Vagina (tissue), 2 donors: ENCODE measurements at regions of chr1 and their contacts with region 1.

Region 1: GRCh38 chr1:246699095-246699735 is 25.0 kb upstream of the SCCPDH start:
- DNase-seq: no peak
- H3K4me3 ChIP-seq: peak overlapping the region; percentile 33 to 45
- H3K27ac ChIP-seq: peak overlapping the region; percentile 64
- H3K4me1 ChIP-seq: peaks cover 18% of the 10 kb centered on the region
- H3K27me3 ChIP-seq: no peaks in the 10 kb centered on the region
- CTCF ChIP-seq: peak; percentile 61 to 73 (median 62)
- POLR2A ChIP-seq: no peak

Region 2: DNA sequence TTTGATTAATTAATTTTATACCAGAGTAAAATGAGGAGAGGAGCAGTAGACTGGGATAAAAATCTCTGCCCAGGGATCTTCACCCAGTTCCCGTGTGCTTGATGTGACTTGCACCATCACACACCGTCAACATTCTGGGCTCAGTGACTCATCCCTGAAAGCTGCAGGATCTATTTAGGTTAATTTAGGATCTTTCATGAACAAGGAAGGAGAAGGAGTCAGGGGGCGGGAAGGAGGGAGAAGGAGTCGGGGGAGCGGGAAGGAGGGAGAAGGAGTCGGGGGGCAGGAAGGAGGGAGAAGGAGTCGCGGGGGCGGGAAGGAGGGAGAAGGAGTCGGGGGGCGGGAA is 374.5 kb before region 1 on chr1:
- intact Hi-C with region 1: no loop called
- DNase-seq: no peak
- H3K4me3 ChIP-seq: no peak overlapping the region
- H3K27ac ChIP-seq: no peak overlapping the region
- H3K4me1 ChIP-seq: no peaks in the 10 kb centered on the region
- H3K27me3 ChIP-seq: no peaks in the 10 kb centered on the region
- CTCF ChIP-seq: no peak
- POLR2A ChIP-seq: no peak

Region 3: DNA sequence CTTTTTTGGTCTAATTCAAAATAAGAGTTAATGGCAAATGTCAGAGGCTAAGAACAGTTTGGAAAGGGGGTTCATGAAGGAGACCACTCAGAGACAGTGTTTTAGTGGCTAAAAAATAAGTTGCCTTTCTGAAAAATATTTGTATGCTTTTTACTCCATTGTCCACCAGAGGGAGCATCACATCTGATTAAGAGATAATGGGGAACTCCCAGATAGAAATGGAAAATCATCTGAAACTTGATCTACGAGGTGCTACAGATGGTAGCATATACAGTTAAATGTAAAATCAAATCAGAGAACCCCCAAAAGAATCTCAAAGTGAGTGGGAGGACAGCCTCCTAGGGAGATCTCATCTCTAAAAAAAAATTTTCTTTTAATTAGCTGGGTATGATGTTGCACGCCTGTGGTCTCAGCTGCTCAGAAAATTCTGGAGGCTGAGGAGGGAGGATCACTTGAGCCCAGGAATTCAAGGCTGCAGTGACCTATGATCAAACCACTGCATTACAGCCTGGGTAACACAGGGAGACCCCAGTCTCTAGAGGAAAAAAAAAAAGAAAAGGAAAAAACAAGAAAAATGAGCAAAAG is 201.8 kb before region 1 on chr1:
- intact Hi-C with region 1: loop called (anchors 5 kb)
- DNase-seq: no peak
- H3K4me3 ChIP-seq: no peak overlapping the region
- H3K27ac ChIP-seq: no peak overlapping the region
- H3K4me1 ChIP-seq: peaks cover 4% of the 10 kb centered on the region
- H3K27me3 ChIP-seq: no peaks in the 10 kb centered on the region
- CTCF ChIP-seq: peak; percentile 65 to 77 (median 73)
- POLR2A ChIP-seq: no peak

Region 4: DNA sequence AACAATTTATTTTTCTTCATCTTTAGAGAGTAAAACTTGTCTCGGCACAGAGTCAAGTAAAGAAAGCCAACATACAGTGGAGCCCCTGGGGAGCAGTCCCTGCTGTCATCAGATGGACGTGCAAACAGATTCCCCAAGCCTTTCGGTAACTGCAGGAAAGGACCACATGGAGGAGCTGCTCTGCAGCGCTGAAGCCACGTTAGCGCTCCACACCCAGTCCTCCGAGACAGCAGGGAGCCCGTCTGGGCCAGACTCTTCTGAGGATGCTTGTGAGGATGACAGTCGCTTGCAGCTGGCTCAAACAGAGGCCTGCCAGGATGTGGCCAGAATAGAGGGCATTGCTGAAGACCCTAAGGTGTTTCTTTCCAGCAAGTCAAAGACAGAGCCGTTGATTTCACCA is 52.1 kb before region 1 on chr1:
- intact Hi-C with region 1: loop called (anchors 5 kb)
- DNase-seq: no peak
- H3K4me3 ChIP-seq: no peak overlapping the region
- H3K27ac ChIP-seq: peak overlapping the region; percentile 20
- H3K4me1 ChIP-seq: peaks cover 9% of the 10 kb centered on the region
- H3K27me3 ChIP-seq: no peaks in the 10 kb centered on the region
- CTCF ChIP-seq: peak in 1 of 3 experiments; percentile 18
- POLR2A ChIP-seq: no peak

Region 5: DNA sequence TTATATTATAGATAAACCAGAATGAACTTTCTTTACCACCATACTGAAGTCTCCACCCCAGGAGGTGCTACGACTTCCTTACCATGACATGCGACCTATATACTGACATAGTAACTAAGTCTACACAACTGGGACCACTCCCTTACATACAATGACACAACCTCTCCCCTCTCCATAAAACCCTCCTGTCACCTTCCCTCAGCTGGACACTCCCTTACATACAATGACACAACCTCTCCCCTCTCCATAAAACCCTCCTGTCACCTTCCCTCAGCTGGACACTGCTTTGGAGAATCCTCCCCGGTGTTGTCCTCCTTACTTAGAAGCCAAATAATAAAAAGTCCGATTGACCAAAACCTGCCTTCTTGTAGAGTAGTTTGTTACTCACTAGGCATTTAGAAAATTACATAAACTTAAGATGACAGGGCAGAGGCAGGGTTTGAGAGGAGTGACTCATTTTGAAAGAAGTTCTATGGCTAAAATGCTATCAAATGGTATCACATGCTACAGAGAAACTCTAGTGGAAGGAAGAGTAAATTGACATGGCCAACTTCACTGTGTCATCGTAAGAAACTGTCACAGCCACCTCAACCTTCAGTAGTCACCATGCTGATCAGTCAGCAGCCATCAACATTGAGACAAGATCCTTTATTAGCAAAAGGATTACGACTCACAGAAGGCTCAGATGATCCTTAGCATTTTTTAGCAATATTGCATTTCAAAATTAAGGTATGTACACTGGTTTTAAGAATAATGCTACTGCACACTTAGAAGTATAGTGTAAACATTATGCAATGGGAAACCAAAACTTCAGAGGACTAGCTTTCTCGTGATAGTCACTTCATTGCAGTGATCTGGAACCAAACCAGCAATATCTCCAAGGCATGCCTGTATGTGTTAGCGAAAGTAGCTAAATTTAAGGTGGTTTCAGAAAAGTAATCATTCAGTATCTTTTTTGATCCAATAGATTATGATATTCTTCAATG is 176.1 kb after region 1 on chr1:
- intact Hi-C with region 1: no loop called
- DNase-seq: no peak
- H3K4me3 ChIP-seq: no peak overlapping the region
- H3K27ac ChIP-seq: no peak overlapping the region
- H3K4me1 ChIP-seq: peaks cover 6% of the 10 kb centered on the region
- H3K27me3 ChIP-seq: no peaks in the 10 kb centered on the region
- CTCF ChIP-seq: no peak
- POLR2A ChIP-seq: no peak